PC-3 (cell line): ENCODE measurements at regions of chr12 and their contacts with region 1.

Region 1: DNA sequence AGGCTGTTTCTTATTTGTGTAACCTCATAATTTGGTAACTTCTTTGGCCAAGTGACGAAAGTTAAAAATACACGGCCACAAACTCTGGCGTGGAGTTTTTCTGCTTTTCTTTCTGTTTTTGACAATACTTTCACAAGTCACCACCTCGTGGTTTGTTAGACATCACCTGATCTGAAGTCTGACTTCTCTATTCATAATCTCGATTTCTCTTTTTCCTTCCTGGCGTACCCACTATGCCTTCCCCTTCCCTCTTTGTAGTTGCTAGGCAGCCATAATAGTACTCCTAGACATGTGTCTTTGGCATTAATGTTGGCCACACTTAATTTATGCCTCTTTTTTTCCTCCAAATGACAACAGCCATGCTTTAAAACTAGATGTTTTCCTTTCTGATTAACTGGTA is 97.6 kb downstream of the POLR3B start:
- DNase-seq: no peak
- ATAC-seq: no peak
- H3K4me3 ChIP-seq: no peak overlapping the region
- H3K27ac ChIP-seq: no peak overlapping the region
- H3K4me1 ChIP-seq: peaks cover 7% of the 10 kb centered on the region; the same call in 1 of the 2 replicates
- H3K27me3 ChIP-seq: no peaks in the 10 kb centered on the region
- CTCF ChIP-seq: no peak

Region 2: DNA sequence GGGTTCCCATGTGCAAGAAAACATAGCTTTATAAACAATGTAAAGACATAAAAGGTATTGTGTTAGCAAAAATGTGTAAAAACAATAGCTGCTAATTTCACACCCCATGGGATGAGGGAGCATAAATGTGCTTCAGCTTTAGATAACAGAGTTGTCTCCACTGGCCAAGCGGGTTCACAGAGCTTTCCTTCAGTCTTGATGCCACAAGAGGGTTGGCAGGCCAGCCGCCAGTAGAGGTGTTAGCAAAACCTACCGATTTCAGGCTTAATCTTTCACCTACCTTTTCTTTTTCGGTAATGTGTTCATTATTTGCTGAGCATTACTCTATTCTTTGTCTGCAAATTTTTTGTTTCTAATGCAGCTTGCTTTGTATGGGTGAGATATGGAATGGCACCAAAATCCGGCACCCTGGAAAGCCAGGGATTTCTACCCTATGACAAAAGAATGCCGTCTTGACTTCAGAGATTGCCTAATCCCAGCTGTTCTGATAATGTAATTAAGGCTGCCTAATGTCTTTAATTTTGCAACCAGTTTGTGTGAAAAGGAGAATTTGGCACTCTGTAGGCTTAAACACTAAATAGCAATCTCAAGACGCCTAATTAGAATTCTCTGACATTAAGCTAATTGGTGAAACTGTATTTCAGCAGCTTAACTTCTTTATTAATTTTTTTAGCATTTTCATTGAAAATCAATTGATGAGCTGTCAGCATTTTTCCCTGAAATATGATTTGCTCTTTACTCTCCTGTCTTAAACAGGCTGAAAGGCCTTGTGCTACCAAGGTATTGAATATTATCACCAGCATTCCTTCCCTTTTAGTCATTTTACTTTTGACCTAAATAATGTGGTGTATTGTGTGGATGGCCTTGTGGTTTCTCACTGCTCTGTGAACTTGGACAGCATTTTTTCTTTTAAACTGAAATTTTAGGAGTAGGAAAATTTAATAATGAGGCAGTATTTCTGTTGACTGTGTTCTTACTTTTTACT is 36.9 kb before region 1 on chr12:
- CTCF ChIA-PET with region 1: no interaction called
- POLR2A ChIA-PET with region 1: no interaction called
- intact Hi-C with region 1: loop called (anchors 2 kb)
- DNase-seq: peak; percentile 94
- ATAC-seq: peak; percentile 99
- H3K4me3 ChIP-seq: peak overlapping the region; percentile 51
- H3K27ac ChIP-seq: peak overlapping the region; percentile 69
- H3K4me1 ChIP-seq: peaks cover 30% of the 10 kb centered on the region
- H3K27me3 ChIP-seq: no peaks in the 10 kb centered on the region
- CTCF ChIP-seq: no peak

Region 3: DNA sequence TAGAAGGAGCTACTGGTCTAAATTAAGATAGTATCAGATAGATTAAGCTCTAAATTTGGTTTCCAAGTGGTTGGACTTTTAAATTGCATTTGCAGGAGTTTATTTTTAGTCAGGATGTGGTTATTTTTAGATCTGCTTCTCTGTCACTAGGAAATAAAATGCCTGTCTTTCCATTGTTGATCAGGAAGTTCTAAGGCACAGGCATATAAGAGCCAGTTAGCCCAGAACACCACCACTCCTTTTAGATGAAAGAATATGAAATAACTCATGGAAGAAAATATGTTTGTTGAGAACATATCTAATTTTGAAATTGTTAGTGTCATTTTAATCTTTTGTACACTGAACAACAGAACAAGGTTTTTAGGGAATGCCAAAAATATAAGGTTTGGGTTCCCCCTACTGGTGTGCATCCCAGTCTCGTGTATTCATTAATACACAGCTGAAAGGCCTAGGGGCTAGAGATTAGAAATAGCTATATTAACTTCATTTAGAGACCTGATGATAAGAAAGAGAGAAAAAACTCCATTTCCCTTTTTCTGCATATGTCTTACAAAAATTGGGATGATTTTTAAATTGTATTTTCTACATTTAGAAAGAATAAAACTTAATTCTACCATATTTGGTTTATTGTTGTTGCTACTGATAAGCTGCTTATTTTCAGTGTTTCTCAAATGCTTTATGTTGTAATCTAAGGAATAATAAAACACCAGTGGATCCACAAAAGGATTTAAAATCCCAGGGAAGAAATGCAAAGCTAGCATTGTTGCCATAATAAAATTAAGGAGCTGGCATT is 386.6 kb after region 1 on chr12:
- CTCF ChIA-PET with region 1: no interaction called
- POLR2A ChIA-PET with region 1: no interaction called
- intact Hi-C with region 1: loop called (anchors 10 kb)
- DNase-seq: peak; percentile 71
- ATAC-seq: peak; percentile 68
- H3K4me3 ChIP-seq: no peak overlapping the region
- H3K27ac ChIP-seq: no peak overlapping the region
- H3K4me1 ChIP-seq: peaks cover 25% of the 10 kb centered on the region
- H3K27me3 ChIP-seq: no peaks in the 10 kb centered on the region
- CTCF ChIP-seq: peak; percentile 91